ENCODE measurements at regions of chr1 and their contacts with region 1.

Region 1: GRCh38 chr1:22131875-22132486 is 10.9 kb downstream of the WNT4 start:
- DNase-seq: peak; percentile 83 to 92 (median 88)
- ATAC-seq: peak; percentile 95
- H3K4me3 ChIP-seq: no peak overlapping the region
- H3K27ac ChIP-seq: no peak overlapping the region
- H3K4me1 ChIP-seq: peaks cover 0 to 27% of the 10 kb centered on the region in 2 experiments; a peak in 2 of 5 replicates
- H3K27me3 ChIP-seq: peaks cover 12 to 64% of the 10 kb centered on the region in 2 experiments; a peak in 3 of 5 replicates
- CTCF ChIP-seq: peak; percentile 95 to 98 (median 97)
- EP300 ChIP-seq: no peak
- POLR2A ChIP-seq: no peak
- RAD21 ChIP-seq: peak; percentile 90 to 98

Region 2: DNA sequence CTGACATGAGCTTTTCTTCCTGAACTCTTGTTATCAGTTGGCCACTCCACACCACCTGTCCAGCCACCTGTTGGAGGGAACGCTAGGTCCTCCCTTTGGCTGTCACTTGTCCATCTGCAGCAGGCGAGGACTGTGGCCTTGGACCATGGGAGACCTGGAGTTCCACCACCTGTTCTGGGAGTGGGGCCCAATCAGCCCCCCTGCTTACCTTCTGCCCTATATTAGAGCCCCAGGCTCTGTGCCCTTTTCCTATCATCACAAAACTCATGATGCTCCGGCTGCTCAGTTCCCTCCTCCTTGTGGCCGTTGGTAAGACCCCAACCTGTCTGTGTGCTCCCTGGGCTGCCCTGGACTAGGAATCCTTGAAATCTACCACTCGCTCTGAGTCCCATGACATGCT is 130.6 kb before region 1 on chr1 and contains the start of gene CELA3A:
- CTCF ChIA-PET with region 1: no interaction called
- POLR2A ChIA-PET with region 1: no interaction called
- in situ Hi-C with region 1: no loop called
- intact Hi-C with region 1: no loop called
- DNase-seq: no peak
- ATAC-seq: no peak
- H3K4me3 ChIP-seq: no peak within 1 kb of the TSS
- H3K27ac ChIP-seq: no peak within 1 kb of the TSS
- H3K4me1 ChIP-seq: peaks cover 0 to 3% of the 10 kb centered on the region in 2 experiments; a peak in 3 of 5 replicates
- H3K27me3 ChIP-seq: peaks cover 4 to 23% of the 10 kb centered on the region in 2 experiments; a peak in 3 of 5 replicates
- CTCF ChIP-seq: no peak
- EP300 ChIP-seq: no peak
- POLR2A ChIP-seq: no peak
- RAD21 ChIP-seq: no peak
- polyA plus RNA-seq, gene CELA3A: not detected

Region 3: DNA sequence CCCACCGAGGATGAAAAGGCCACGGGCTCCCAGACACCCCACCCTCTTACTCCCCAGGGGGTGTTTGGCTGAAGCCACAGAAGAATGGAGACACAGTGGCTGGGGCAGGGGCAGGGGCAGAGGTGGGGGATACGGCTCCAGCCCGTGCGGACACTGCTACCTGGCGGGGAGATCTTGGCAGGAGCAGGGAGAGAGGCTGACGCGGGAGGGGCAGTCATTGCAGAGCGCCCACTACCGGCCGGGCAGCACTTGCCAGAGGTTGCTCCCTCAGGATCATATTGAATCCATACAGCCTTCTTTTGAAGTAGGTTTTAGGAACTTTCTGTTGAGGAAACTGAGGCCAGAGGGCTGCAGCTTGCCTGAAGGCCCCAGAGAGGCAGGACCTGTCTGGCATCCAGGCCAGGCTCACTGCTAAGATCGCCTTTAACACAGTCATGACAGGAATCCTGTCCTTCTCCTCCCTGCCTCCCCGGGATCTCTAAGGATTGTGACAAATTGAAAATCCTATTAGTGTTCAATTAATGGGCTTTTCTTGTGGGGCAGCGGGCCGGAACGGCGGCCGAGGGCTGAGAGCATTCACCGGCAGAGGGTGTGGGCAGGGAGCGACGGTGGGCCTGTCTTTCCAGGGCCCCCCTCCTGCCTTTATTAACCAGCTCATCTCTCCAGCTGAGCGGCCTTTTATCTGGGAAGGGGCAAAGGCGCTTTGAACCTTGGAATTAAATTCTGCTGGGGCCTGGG is 76.4 kb after region 1 on chr1:
- CTCF ChIA-PET with region 1: interaction called, 7 read pairs
- POLR2A ChIA-PET with region 1: no interaction called
- in situ Hi-C with region 1: no loop called
- intact Hi-C with region 1: loop called (anchors 5 kb)
- DNase-seq: peak; percentile 54 to 75 (median 64)
- ATAC-seq: peak; percentile 89
- H3K4me3 ChIP-seq: no peak overlapping the region
- H3K27ac ChIP-seq: no peak overlapping the region
- H3K4me1 ChIP-seq: no peaks in the 10 kb centered on the region
- H3K27me3 ChIP-seq: peaks cover 64 to 84% of the 10 kb centered on the region in 2 experiments
- CTCF ChIP-seq: peak; percentile 87 to 97 (median 88)
- EP300 ChIP-seq: no peak
- POLR2A ChIP-seq: no peak
- RAD21 ChIP-seq: peak in 1 of 2 experiments; percentile 58; a peak in 2 of 4 replicates

Region 4: GRCh38 chr1:22275721-22276395 is 143.9 kb after region 1 on chr1:
- CTCF ChIA-PET with region 1: no interaction called
- POLR2A ChIA-PET with region 1: no interaction called
- in situ Hi-C with region 1: no loop called
- intact Hi-C with region 1: loop called (anchors 1 kb)
- DNase-seq: peak; percentile 68 to 82 (median 81)
- ATAC-seq: peak; percentile 97
- H3K4me3 ChIP-seq: no peak overlapping the region
- H3K27ac ChIP-seq: no peak overlapping the region
- H3K4me1 ChIP-seq: peaks cover 0 to 4% of the 10 kb centered on the region in 2 experiments; a peak in 1 of 5 replicates
- H3K27me3 ChIP-seq: peaks cover 22 to 64% of the 10 kb centered on the region in 2 experiments; a peak in 4 of 5 replicates
- CTCF ChIP-seq: peak; percentile 80 to 94 (median 85)
- EP300 ChIP-seq: no peak
- POLR2A ChIP-seq: no peak
- RAD21 ChIP-seq: peak; percentile 37 to 75

Region 5: GRCh38 chr1:22317226-22317919 is 185.4 kb after region 1 on chr1:
- CTCF ChIA-PET with region 1: no interaction called
- POLR2A ChIA-PET with region 1: no interaction called
- in situ Hi-C with region 1: no loop called
- intact Hi-C with region 1: loop called (anchors 5 kb)
- DNase-seq: peak; percentile 55 to 88 (median 83)
- ATAC-seq: peak; percentile 92
- H3K4me3 ChIP-seq: no peak overlapping the region
- H3K27ac ChIP-seq: no peak overlapping the region
- H3K4me1 ChIP-seq: peaks cover 0 to 5% of the 10 kb centered on the region in 2 experiments; a peak in 1 of 5 replicates
- H3K27me3 ChIP-seq: peaks cover 69 to 90% of the 10 kb centered on the region in 2 experiments
- CTCF ChIP-seq: peak; percentile 71 to 84 (median 75)
- EP300 ChIP-seq: no peak
- POLR2A ChIP-seq: no peak
- RAD21 ChIP-seq: peak; percentile 44 to 74

Region 6: GRCh38 chr1:22641906-22642636 is 510.1 kb after region 1 on chr1:
- CTCF ChIA-PET with region 1: interaction called, 11 read pairs
- POLR2A ChIA-PET with region 1: no interaction called
- in situ Hi-C with region 1: loop called (anchors 5 kb)
- intact Hi-C with region 1: loop called (anchors 2 kb)
- DNase-seq: peak; percentile 83 to 94 (median 92)
- ATAC-seq: peak; percentile 95
- H3K4me3 ChIP-seq: no peak overlapping the region
- H3K27ac ChIP-seq: no peak overlapping the region
- H3K4me1 ChIP-seq: peaks cover 0 to 13% of the 10 kb centered on the region in 2 experiments; a peak in 3 of 5 replicates
- H3K27me3 ChIP-seq: peaks cover 1 to 42% of the 10 kb centered on the region in 2 experiments; a peak in 3 of 5 replicates
- CTCF ChIP-seq: peak; percentile 89 to 94 (median 94)
- EP300 ChIP-seq: no peak
- POLR2A ChIP-seq: no peak
- RAD21 ChIP-seq: peak; percentile 94 to 98